GM10248 (cell line): ENCODE measurements at regions of chr1 and their contacts with region 1.

Region 1: GRCh38 chr1:236259043-236259442 is 22.7 kb downstream of the ERO1B start:
- DNase-seq: no peak
- CTCF ChIP-seq: no peak

Region 2: GRCh38 chr1:236273358-236273757 is 14.3 kb after region 1 on chr1:
- CTCF ChIA-PET with region 1: interaction called, 10 read pairs
- POLR2A ChIA-PET with region 1: no interaction called
- DNase-seq: no peak
- CTCF ChIP-seq: no peak